K562 (cell line): ENCODE measurements at regions of chr10 and their contacts with region 1.

Region 1: GRCh38 chr10:59894114-59894513 is 12.2 kb downstream of the CCDC6 start:
- DNase-seq: no peak
- ATAC-seq: no peak
- H3K4me3 ChIP-seq: no peak overlapping the region
- H3K27ac ChIP-seq: no peak overlapping the region
- H3K4me1 ChIP-seq: peaks cover 13 to 53% of the 10 kb centered on the region in 2 experiments
- H3K27me3 ChIP-seq: no peaks in the 10 kb centered on the region
- CTCF ChIP-seq: no peak
- EP300 ChIP-seq: no peak
- POLR2A ChIP-seq: no peak
- RAD21 ChIP-seq: no peak

Region 2: DNA sequence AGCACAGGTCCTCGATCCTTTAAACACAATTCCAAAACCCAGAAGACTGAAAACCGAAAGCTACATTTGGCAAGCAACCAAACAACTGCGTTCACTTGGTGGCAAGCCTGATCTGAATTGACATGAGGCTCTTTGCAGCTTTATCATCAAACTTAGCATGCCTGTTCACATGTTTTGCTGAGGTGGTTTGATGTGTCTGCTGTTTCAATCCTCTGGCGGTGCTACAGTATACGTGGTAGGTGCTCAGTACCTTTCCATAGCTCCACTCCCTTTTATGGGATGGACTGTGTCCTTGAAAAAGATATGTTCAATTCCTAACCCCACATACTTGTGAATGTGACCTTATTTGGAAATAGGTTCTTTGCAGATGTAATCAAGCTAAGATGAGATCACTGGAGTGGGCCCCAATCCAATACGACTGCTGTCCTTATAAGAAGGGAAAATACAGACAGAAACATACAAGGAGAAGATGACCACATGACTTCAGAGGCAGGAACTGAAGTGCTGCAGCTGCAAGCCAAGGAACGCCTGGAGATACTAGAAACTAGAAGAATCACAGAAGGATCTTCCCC is 21.1 kb before region 1 on chr10:
- CTCF ChIA-PET with region 1: no interaction called
- POLR2A ChIA-PET with region 1: interaction called, 18 read pairs
- in situ Hi-C with region 1: no loop called
- intact Hi-C with region 1: no loop called
- DNase-seq: peak in 1 of 4 experiments; percentile 46
- ATAC-seq: peak; percentile 51
- H3K4me3 ChIP-seq: no peak overlapping the region
- H3K27ac ChIP-seq: peak overlapping the region; percentile 51; the same call in 2 of the 3 replicates
- H3K4me1 ChIP-seq: peaks cover 0 to 41% of the 10 kb centered on the region in 2 experiments; a peak in 4 of 5 replicates
- H3K27me3 ChIP-seq: no peaks in the 10 kb centered on the region
- CTCF ChIP-seq: no peak
- EP300 ChIP-seq: no peak; the same call in 1 of the 2 replicates
- POLR2A ChIP-seq: no peak
- RAD21 ChIP-seq: no peak

Region 3: GRCh38 chr10:59926086-59926485 is 32.0 kb after region 1 on chr10:
- CTCF ChIA-PET with region 1: no interaction called
- POLR2A ChIA-PET with region 1: no interaction called
- in situ Hi-C with region 1: no loop called
- intact Hi-C with region 1: no loop called
- DNase-seq: no peak
- ATAC-seq: no peak
- H3K4me3 ChIP-seq: no peak overlapping the region
- H3K27ac ChIP-seq: no peak overlapping the region
- H3K4me1 ChIP-seq: no peaks in the 10 kb centered on the region
- H3K27me3 ChIP-seq: no peaks in the 10 kb centered on the region
- CTCF ChIP-seq: no peak
- EP300 ChIP-seq: no peak
- POLR2A ChIP-seq: no peak
- RAD21 ChIP-seq: no peak